Psoas muscle (tissue), 8 donors: ENCODE measurements at regions of chr6 and their contacts with region 1.

Region 1: GRCh38 chr6:56843573-56844349 is 111.1 kb upstream of the BEND6 start:
- DNase-seq: peak; percentile 81 to 92
- ATAC-seq: peak; percentile 88 to 95 (median 92)
- H3K4me3 ChIP-seq: peak overlapping the region; percentile 84
- H3K27ac ChIP-seq: peak overlapping the region; percentile 98
- H3K4me1 ChIP-seq: peaks cover 14% of the 10 kb centered on the region
- H3K27me3 ChIP-seq: no peaks in the 10 kb centered on the region
- CTCF ChIP-seq: peak; percentile 59

Region 2: DNA sequence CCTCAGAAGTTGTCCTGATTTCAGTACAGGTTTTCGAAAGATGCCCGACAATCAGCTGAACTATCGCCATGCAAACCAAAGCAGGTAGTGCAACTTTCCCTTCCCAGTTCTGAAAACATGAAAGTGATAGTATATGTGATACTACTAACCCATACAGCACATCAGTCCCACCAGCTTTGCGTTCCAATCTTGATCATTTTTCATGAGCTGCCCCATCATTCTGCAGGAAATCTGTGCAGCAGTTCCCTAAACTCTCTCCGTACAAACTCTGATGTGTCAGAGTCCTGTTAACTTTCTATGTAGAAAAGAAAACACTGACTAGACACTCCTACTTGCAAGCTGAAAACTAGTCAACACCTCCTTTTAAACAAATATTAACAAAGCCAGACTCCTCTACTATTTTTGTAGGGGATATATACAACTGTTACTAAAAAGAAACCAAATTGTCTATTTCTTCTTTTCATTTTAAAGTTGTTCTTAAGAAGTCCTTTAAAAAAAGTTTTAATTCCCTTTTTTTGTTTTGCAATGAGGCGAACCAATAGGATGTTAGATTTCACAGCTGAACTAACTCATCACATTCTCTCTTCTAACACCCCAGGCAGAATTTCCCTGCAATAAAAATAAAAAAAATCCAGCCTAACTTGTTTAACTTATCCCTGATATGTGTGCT is 101.5 kb before region 1 on chr6:
- intact Hi-C with region 1: no loop called
- DNase-seq: no peak
- ATAC-seq: no peak
- H3K4me3 ChIP-seq: peak overlapping the region; percentile 13
- H3K27ac ChIP-seq: no peak overlapping the region
- H3K4me1 ChIP-seq: peaks cover 59% of the 10 kb centered on the region
- H3K27me3 ChIP-seq: no peaks in the 10 kb centered on the region
- CTCF ChIP-seq: no peak

Region 3: GRCh38 chr6:56764081-56764566 is 79.6 kb before region 1 on chr6:
- intact Hi-C with region 1: loop called in 1 of 2 experiments (anchors 5 kb)
- DNase-seq: no peak
- ATAC-seq: peak; percentile 41 to 69 (median 58)
- H3K4me3 ChIP-seq: no peak overlapping the region
- H3K27ac ChIP-seq: peak overlapping the region; percentile 78
- H3K4me1 ChIP-seq: peaks cover 64% of the 10 kb centered on the region
- H3K27me3 ChIP-seq: no peaks in the 10 kb centered on the region
- CTCF ChIP-seq: peak; percentile 31

Region 4: GRCh38 chr6:56772737-56773184 is 71.0 kb before region 1 on chr6:
- intact Hi-C with region 1: loop called (anchors 2 to 5 kb)
- DNase-seq: peak; percentile 35 to 79
- ATAC-seq: peak; percentile 85 to 95 (median 90)
- H3K4me3 ChIP-seq: no peak overlapping the region
- H3K27ac ChIP-seq: peak overlapping the region; percentile 78
- H3K4me1 ChIP-seq: peaks cover 75% of the 10 kb centered on the region
- H3K27me3 ChIP-seq: no peaks in the 10 kb centered on the region
- CTCF ChIP-seq: no peak

Region 5: DNA sequence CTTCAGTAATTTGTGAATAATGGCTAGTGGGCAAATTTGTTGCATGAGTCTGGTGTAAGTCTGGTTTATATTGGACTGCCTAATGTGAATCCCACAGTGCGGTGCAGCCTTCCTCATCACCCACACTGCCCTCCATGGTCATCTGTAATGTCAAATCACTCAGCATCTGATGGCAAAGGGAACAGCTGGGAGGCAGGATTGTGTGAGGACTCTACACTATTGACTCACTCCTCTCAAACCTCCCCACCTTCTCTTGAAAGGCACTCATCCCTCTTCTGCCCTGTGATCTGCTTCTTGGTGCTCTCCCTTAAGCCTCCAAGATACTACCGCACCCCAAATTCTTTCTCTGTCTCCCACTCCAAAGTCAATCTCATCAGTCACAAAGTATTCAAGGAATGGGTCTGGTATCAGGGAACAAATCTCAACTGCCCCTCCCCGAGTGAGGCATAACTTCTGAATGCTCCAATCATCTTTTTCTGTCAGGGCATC is 34.8 kb before region 1 on chr6:
- intact Hi-C with region 1: loop called (anchors 5 kb)
- DNase-seq: peak in 1 of 2 donors; percentile 20
- ATAC-seq: peak; percentile 78 to 95 (median 85)
- H3K4me3 ChIP-seq: no peak overlapping the region
- H3K27ac ChIP-seq: peak overlapping the region; percentile 93
- H3K4me1 ChIP-seq: peaks cover 77% of the 10 kb centered on the region
- H3K27me3 ChIP-seq: no peaks in the 10 kb centered on the region
- CTCF ChIP-seq: no peak